ENCODE measurements at regions of chr7 and their contacts with region 1.

Region 1: GRCh38 chr7:121395961-121396757 is at the start of gene FAM3C:
- DNase-seq: peak; percentile 94
- ATAC-seq: peak; percentile 89
- H3K4me3 ChIP-seq: peak within 1 kb of the TSS; percentile 65 to 90 (median 82)
- H3K4me3 Mint-ChIP-seq: peak within 1 kb of the TSS; percentile 92
- H3K27ac ChIP-seq: peak within 1 kb of the TSS; percentile 82 to 96
- H3K27ac Mint-ChIP-seq: peak within 1 kb of the TSS; percentile 97
- H3K4me1 ChIP-seq: peaks cover 32 to 36% of the 10 kb centered on the region in 2 donors
- H3K4me1 Mint-ChIP-seq: peaks cover 42% of the 10 kb centered on the region
- H3K27me3 ChIP-seq: no peaks in the 10 kb centered on the region
- H3K27me3 Mint-ChIP-seq: no peaks in the 10 kb centered on the region
- CTCF ChIP-seq: peak; percentile 91
- total RNA-seq, gene FAM3C: 73.1 and 75.4 TPM in 2 replicates

Region 2: GRCh38 chr7:120987683-120988590 is 408.2 kb before region 1 on chr7:
- CTCF ChIA-PET with region 1: no interaction called
- POLR2A ChIA-PET with region 1: no interaction called
- intact Hi-C with region 1: loop called (anchors 5 kb)
- DNase-seq: peak; percentile 89
- ATAC-seq: peak; percentile 95
- H3K4me3 ChIP-seq: peak overlapping the region; percentile 29 to 77 (median 49)
- H3K4me3 Mint-ChIP-seq: peak overlapping the region; percentile 95
- H3K27ac ChIP-seq: no peak overlapping the region
- H3K27ac Mint-ChIP-seq: no peak overlapping the region
- H3K4me1 ChIP-seq: peaks cover 24% of the 10 kb centered on the region in 2 donors
- H3K4me1 Mint-ChIP-seq: peaks cover 23% of the 10 kb centered on the region
- H3K27me3 ChIP-seq: peaks cover 0 to 20% (median 18%) of the 10 kb centered on the region in 4 experiments
- H3K27me3 Mint-ChIP-seq: peaks cover 44% of the 10 kb centered on the region
- CTCF ChIP-seq: peak; percentile 98

Region 3: DNA sequence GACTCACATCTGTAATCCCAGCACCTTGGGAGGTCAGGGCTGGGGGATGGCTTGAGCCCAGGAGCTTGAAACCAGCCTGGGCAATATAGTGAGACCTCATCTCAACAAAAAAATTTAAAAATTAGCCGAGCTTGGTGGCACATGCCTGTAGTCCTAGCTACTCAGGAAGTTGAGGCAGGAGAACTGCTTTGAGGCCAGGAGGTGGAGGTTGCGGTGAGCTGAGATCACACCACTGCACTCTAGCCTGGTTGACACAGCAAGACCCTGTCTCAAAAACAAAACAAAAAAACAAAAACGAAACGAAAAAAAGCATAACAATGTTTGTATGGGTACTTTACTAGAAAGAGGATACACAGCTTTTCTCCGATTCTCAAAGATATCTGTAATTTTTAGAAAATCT is 35.6 kb before region 1 on chr7:
- CTCF ChIA-PET with region 1: interaction called, 13 read pairs
- POLR2A ChIA-PET with region 1: no interaction called
- intact Hi-C with region 1: no loop called
- DNase-seq: no peak
- ATAC-seq: no peak
- H3K4me3 ChIP-seq: no peak overlapping the region
- H3K4me3 Mint-ChIP-seq: no peak overlapping the region
- H3K27ac ChIP-seq: peak overlapping the region in 1 of 2 donors; percentile 11
- H3K27ac Mint-ChIP-seq: no peak overlapping the region
- H3K4me1 ChIP-seq: no peaks in the 10 kb centered on the region
- H3K4me1 Mint-ChIP-seq: no peaks in the 10 kb centered on the region
- H3K27me3 ChIP-seq: no peaks in the 10 kb centered on the region
- H3K27me3 Mint-ChIP-seq: no peaks in the 10 kb centered on the region
- CTCF ChIP-seq: no peak

Region 4: DNA sequence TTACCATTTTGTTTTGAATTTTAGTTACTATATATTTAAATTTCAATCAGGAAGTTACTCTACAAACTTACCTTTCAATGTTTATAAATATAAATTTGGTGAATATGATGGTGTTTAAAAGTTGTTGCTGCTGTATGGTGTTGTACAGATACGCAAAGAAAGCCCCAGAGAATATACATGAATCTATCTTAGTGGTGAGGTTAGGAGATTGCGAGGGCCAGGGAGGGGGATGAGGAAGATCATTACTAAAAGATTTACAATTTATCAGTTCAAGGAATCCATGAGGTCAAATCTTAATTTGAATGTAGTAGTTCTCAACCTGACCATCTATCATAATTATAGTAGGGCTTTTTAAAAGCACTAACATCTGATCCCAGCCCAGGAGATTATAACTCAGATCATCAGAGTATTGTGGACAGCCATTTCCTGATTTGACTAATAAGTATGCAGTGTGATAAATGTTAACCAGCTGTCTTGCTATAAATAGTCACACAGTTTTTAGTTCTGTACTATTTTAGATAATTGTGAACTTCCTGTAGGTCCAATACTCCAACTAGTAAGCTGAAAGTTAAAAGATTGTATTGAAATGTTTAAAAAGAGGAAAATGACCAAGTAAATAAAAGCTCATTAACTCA is 23.7 kb before region 1 on chr7:
- CTCF ChIA-PET with region 1: interaction called, 286 read pairs
- POLR2A ChIA-PET with region 1: interaction called, 6 read pairs
- intact Hi-C with region 1: loop called (anchors 1 kb)
- DNase-seq: peak; percentile 64
- ATAC-seq: peak; percentile 69
- H3K4me3 ChIP-seq: peak overlapping the region in 3 of 5 experiments; percentile 6 to 50 (median 8)
- H3K4me3 Mint-ChIP-seq: peak overlapping the region; percentile 66
- H3K27ac ChIP-seq: peak overlapping the region; percentile 89 to 94
- H3K27ac Mint-ChIP-seq: peak overlapping the region; percentile 86
- H3K4me1 ChIP-seq: peaks cover 87% of the 10 kb centered on the region in 2 donors
- H3K4me1 Mint-ChIP-seq: peaks cover 80% of the 10 kb centered on the region
- H3K27me3 ChIP-seq: no peaks in the 10 kb centered on the region
- H3K27me3 Mint-ChIP-seq: no peaks in the 10 kb centered on the region
- CTCF ChIP-seq: no peak

Region 5: GRCh38 chr7:121385800-121386179 is 10.4 kb before region 1 on chr7:
- CTCF ChIA-PET with region 1: interaction called, 71 read pairs
- POLR2A ChIA-PET with region 1: interaction called, 26 read pairs
- intact Hi-C with region 1: loop called (anchors 1 kb)
- DNase-seq: peak; percentile 89
- ATAC-seq: peak; percentile 89
- H3K4me3 ChIP-seq: peak overlapping the region in 1 of 5 experiments; percentile 37
- H3K4me3 Mint-ChIP-seq: peak overlapping the region; percentile 79
- H3K27ac ChIP-seq: peak overlapping the region; percentile 96 to 99
- H3K27ac Mint-ChIP-seq: peak overlapping the region; percentile 96
- H3K4me1 ChIP-seq: peaks cover 89 to 96% of the 10 kb centered on the region in 2 donors
- H3K4me1 Mint-ChIP-seq: peaks cover 92% of the 10 kb centered on the region
- H3K27me3 ChIP-seq: no peaks in the 10 kb centered on the region
- H3K27me3 Mint-ChIP-seq: no peaks in the 10 kb centered on the region
- CTCF ChIP-seq: no peak

Region 6: DNA sequence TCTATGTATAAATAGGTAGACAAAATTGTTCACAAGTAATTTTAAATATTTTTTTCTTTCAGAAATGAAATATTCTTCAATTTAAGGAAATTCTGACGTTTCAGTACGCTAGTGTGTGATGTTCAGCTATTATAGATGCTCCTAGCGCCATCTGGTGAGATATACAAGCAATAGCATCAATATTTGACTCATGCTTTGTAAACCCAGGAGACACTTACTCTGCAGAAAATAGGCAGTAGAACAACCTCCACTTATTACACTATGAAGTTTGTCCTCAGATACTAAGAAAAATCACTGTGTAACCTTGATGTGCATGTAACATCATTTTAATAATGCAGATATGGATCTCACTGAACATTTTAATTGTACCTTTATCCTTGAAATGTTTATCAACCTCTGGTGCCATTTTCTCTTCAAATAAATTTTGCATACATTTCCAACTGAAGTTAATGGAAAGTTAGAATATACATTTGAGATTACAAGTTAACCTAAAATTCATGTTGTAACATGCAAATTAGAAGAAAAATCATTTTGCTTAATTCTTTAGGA is 151.5 kb after region 1 on chr7:
- CTCF ChIA-PET with region 1: interaction called, 46 read pairs
- POLR2A ChIA-PET with region 1: no interaction called
- intact Hi-C with region 1: loop called (anchors 1 kb)
- DNase-seq: peak; percentile 74
- ATAC-seq: peak; percentile 86
- H3K4me3 ChIP-seq: no peak overlapping the region
- H3K4me3 Mint-ChIP-seq: no peak overlapping the region
- H3K27ac ChIP-seq: no peak overlapping the region
- H3K27ac Mint-ChIP-seq: no peak overlapping the region
- H3K4me1 ChIP-seq: no peaks in the 10 kb centered on the region
- H3K4me1 Mint-ChIP-seq: peaks cover 9% of the 10 kb centered on the region
- H3K27me3 ChIP-seq: no peaks in the 10 kb centered on the region
- H3K27me3 Mint-ChIP-seq: peaks cover 3% of the 10 kb centered on the region
- CTCF ChIP-seq: peak; percentile 96

Region 7: DNA sequence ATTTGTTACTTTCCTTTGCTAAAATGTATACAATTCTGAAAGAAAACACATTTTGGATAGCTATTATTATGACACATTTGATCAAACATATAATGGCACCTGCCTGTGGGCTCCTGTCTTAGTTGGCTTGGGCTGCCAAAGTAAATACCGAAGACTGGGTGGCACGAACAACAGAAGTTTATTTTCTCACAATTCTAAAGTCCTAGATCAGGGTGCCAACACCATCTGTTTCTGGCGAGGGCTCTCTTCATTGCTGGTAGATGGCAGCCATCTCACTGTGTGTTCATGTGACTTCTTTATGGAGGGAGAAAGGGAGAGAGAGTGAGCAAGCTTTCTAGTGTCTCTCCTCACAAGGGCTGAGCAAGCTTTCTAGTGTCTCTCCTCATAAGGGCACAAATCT is 195.8 kb after region 1 on chr7:
- CTCF ChIA-PET with region 1: no interaction called
- POLR2A ChIA-PET with region 1: no interaction called
- intact Hi-C with region 1: no loop called
- DNase-seq: no peak
- ATAC-seq: no peak
- H3K4me3 ChIP-seq: no peak overlapping the region
- H3K4me3 Mint-ChIP-seq: no peak overlapping the region
- H3K27ac ChIP-seq: no peak overlapping the region
- H3K27ac Mint-ChIP-seq: no peak overlapping the region
- H3K4me1 ChIP-seq: no peaks in the 10 kb centered on the region
- H3K4me1 Mint-ChIP-seq: no peaks in the 10 kb centered on the region
- H3K27me3 ChIP-seq: peaks cover 0 to 4% (median 2%) of the 10 kb centered on the region in 4 experiments
- H3K27me3 Mint-ChIP-seq: no peaks in the 10 kb centered on the region
- CTCF ChIP-seq: no peak